Stomach (tissue), 19 donors: ENCODE measurements at regions of chr1 and their contacts with region 1.

Region 1: DNA sequence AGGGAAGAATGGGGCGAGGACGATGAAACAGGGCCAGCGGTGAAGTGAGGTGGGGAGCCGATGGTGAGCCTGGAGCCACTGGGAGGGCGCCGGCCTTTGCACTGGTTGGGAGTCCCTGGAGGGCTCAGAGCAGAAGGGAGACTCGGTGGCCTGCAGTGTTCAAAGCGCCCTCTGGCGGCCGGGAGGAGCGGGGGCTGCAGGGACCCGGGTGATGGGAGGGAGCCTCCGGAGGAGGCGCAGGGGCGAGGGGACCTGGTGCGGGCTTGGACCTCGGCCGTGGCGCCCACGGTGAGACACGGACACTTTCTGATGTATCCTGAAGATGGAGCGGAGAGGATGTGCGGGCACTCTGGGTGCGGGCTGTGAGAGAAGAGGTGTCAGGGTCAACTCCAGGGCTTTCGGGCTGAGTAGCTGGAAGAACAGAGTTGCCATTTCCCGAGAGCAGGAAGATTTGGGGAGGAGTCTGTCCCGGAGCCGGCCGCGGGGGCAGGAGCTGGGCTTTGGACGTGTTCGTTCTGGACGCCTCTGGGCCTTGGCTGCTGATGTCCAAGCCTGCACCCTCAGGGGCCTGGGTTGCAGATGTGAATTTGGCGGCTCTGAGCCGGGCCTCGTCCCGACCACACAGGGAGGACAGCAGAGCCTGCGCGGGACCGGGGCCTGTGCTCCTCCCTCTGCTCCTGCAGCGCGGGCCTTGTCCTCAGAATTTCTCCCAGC is 29.7 kb downstream of the HEYL start:
- DNase-seq: peak; percentile 73 to 83
- H3K4me3 ChIP-seq: no peak overlapping the region
- H3K27ac ChIP-seq: peak overlapping the region in 1 of 5 donors; percentile 21
- H3K4me1 ChIP-seq: peaks cover 0 to 18% (median 7%) of the 10 kb centered on the region in 4 donors
- H3K27me3 ChIP-seq: peaks cover 0 to 18% (median 0%) of the 10 kb centered on the region in 3 donors
- CTCF ChIP-seq: peak in 3 of 7 experiments; percentile 55 to 75 (median 59)
- EP300 ChIP-seq: no peak
- POLR2A ChIP-seq: no peak

Region 2: DNA sequence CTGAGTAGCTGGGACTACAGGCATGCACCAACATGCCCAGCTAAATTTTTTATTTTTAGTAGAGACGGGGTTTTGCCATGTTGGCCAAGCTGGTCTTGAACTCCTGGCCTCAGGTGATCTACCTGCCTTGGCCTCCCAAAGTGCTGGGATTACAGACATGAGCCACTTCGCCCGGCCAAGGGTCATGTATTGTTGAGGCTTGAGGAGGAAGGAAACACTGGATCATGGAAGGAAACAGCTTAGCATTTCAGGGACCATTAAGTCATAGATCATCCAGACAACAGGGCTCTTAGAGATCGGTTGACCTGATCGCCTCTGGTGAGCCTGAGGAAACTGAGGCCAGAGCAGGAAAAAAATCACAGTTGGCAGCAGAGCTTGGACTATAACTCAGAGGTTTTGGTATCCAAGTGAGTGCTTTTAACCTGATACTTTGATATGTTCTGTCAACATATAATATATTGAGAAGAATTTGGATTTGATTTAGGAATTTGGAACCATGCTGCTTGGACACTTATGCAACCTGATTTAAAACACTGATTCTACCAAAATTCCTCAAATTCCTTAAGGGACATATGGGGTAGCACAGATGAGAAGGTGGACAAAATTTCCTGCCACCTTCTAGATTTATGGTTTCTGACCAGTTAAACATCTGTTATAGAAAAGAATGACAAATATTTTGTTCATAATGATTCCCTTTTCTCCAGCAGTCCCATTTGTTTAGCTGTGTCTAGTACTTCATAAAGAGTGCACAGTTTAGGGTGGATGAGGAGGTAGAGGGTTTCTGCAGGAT is 131.5 kb before region 1 on chr1:
- intact Hi-C with region 1: no loop called
- DNase-seq: no peak
- H3K4me3 ChIP-seq: no peak overlapping the region
- H3K27ac ChIP-seq: no peak overlapping the region
- H3K4me1 ChIP-seq: peaks cover 0 to 18% (median 0%) of the 10 kb centered on the region in 4 donors
- H3K27me3 ChIP-seq: no peaks in the 10 kb centered on the region
- CTCF ChIP-seq: no peak
- EP300 ChIP-seq: no peak
- POLR2A ChIP-seq: no peak

Region 3: DNA sequence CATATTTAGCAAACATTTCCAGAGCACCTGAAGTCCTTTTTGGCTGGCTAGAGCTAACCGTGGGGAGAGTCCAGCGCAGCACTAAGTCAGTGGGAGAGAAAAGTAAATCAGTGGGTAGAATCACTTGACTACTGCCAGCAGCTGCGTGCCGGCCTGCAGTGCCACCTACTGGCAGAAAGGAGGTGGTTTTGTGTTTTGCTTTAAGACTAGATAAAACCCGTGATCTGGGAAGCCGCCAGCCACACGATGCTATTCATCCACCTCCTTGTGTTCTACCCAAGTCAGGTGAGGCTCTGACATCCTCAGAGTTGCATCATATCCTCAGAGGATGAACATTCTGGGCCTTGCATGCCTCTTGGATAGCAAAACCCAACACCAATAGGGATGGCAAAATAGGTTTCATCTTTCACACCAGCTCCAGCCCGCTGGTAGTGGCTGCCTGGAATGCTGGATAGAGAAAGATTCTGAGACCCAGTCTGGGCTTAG is 43.8 kb after region 1 on chr1:
- intact Hi-C with region 1: loop called (anchors 5 kb)
- DNase-seq: peak; percentile 79 to 93
- H3K4me3 ChIP-seq: no peak overlapping the region
- H3K27ac ChIP-seq: no peak overlapping the region
- H3K4me1 ChIP-seq: peaks cover 0 to 16% (median 7%) of the 10 kb centered on the region in 4 donors
- H3K27me3 ChIP-seq: peaks cover 0 to 15% (median 0%) of the 10 kb centered on the region in 3 donors
- CTCF ChIP-seq: peak in 6 of 7 experiments; percentile 17 to 92 (median 86)
- EP300 ChIP-seq: no peak
- POLR2A ChIP-seq: no peak

Region 4: DNA sequence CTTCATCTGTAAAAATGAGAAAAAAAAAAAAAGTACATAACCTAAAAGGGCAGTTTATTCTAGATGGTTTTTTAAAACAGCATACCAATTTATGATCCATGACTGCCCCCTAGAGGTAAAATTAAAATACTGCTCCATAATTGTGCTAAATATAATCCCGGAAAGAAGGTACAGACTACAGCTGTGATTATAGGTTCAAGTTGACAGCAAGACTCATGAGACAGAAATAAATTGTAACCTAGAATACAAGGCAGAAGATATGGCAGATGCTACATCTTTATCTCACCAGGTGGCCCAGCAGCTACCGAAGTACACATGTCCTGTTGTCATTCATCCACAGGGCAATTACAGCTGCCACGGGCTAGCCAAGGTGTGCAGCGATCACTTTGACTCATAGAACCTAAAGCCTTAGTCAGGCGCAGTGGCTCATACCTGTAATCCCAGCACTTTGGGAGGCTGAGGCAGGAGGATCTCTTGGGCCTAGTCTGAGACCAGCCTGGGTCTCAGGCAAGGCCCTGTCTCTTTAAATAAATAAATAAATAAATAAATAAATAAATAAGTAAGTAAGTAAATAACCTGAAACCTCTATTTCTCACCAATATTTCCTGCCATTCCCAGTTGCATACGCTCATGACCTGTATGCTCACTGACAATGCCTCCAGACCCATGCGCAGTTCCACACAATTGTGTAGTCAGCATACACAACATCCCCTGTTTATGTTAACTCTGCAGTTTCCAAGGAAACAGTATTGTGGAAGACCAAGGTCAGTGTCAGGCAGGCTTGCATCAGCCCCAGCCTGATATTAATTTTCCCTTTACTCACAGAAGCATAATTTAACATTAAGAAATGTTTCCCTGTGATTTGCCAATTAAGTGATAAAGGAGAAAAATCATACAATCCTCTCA is 110.6 kb after region 1 on chr1:
- intact Hi-C with region 1: loop called (anchors 5 kb)
- DNase-seq: peak in 1 of 2 donors; percentile 84
- H3K4me3 ChIP-seq: no peak overlapping the region
- H3K27ac ChIP-seq: no peak overlapping the region
- H3K4me1 ChIP-seq: no peaks in the 10 kb centered on the region
- H3K27me3 ChIP-seq: peaks cover 0 to 43% (median 9%) of the 10 kb centered on the region in 3 donors
- CTCF ChIP-seq: peak in 5 of 7 experiments; percentile 50 to 83 (median 73)
- EP300 ChIP-seq: no peak
- POLR2A ChIP-seq: no peak